Astrocyte of the cerebellum (primary cell): ENCODE measurements at regions of chr4 and their contacts with region 1.

Region 1: GRCh38 chr4:82721819-82722423 is 76.7 kb downstream of the SCD5 start:
- DNase-seq: no peak
- H3K4me3 ChIP-seq: no peak overlapping the region
- CTCF ChIP-seq: peak; percentile 44

Region 2: GRCh38 chr4:82462415-82462831 is 259.5 kb before region 1 on chr4:
- in situ Hi-C with region 1: loop called (anchors 10 kb)
- DNase-seq: peak; percentile 75
- H3K4me3 ChIP-seq: no peak overlapping the region
- CTCF ChIP-seq: peak; percentile 70

Region 3: DNA sequence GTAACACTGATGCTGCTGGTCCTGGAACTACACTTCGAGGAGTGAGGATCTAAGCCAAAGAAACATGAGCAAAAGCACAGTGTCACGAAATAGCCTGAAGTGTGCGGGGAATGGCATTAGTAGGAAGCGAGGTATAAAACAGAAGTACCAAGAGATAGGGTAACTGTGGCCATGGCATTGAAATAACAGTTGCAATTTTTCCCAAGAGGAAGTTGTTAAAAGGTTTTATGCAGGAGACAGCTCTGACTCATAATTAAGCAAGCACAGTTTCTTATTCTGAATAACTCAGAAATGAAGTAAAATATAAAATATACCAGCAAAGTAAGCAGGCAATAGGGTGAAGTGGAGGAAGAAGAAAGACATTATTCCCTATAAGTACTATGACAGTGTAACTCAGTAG is 69.9 kb before region 1 on chr4:
- in situ Hi-C with region 1: loop called (anchors 5 kb)
- DNase-seq: no peak
- H3K4me3 ChIP-seq: no peak overlapping the region
- CTCF ChIP-seq: no peak

Region 4: DNA sequence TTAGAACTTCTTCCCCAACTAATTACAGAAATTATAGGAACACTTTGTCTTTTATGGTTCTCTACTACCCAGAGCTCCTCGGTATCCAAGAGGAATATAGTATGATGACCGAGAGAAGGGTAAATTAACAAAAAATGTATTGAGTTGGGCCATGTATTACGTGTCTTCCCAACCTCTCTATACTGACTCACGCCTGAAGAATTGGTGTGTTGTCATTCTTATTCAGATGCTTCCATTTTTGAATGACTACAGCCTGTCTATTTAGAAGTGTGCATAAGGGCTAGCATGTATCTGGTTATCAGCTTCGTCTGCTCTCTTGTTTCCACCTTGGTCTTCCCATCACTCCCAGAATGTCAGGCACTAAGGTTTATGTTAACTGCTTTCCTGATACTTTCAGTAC is 101.1 kb after region 1 on chr4:
- in situ Hi-C with region 1: no loop called
- DNase-seq: no peak
- H3K4me3 ChIP-seq: no peak overlapping the region
- CTCF ChIP-seq: no peak